Activated CD8-positive, alpha-beta T cell treated with anti-CD3 and anti-CD28 coated beads, Interleukin-2, amount 10 ng/mL, durations not matched to agents 7 days and 5 days (primary cell): ENCODE measurements at regions of chr10 and their contacts with region 1.

Region 1: DNA sequence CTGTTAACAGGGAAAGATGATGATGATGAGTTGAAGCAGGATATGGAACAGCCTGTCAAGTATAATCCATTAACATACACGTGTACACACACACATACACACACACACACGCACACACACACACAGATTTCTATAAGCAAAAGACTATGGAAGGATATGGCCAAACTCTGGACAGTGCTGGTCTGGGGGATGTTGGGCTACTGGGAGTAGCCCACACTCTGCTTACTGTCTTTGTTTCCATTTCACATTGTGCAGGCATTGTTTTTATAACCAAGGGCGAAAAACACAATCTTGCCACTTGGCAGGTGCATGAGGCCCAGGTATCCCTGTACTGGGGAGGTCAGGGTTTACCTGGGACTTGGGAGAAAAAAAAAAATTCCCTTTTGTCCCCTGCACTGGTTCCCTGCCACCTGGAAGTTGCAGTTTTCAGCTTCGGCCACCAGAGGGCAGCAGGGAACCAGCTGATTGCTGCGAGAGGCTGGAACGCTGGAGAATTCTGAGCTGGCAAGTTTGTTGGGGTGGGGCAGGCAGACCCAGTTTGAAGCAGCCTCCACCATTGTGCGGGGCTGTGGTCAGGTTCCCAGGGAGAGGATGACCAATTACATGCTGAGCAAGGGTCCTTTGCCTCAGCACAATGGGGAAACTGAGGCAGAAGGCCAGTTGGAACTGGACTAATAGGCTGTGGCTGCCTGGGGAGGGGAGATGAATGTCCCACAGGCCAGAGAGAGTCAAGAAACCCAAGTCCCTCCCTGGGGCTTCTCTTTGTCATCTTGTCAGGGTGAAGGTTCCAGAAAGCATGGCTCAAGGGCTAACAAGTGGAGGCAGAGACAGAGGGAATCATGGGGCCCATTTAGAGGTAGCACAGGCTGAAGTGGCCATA is 27.3 kb downstream of the PPIF start:
- DNase-seq: peak; percentile 80
- ATAC-seq: peak; percentile 78
- H3K4me3 Mint-ChIP-seq: no peak overlapping the region
- H3K27ac Mint-ChIP-seq: no peak overlapping the region
- H3K4me1 Mint-ChIP-seq: peaks cover 4% of the 10 kb centered on the region
- H3K27me3 Mint-ChIP-seq: peaks cover 11% of the 10 kb centered on the region

Region 2: DNA sequence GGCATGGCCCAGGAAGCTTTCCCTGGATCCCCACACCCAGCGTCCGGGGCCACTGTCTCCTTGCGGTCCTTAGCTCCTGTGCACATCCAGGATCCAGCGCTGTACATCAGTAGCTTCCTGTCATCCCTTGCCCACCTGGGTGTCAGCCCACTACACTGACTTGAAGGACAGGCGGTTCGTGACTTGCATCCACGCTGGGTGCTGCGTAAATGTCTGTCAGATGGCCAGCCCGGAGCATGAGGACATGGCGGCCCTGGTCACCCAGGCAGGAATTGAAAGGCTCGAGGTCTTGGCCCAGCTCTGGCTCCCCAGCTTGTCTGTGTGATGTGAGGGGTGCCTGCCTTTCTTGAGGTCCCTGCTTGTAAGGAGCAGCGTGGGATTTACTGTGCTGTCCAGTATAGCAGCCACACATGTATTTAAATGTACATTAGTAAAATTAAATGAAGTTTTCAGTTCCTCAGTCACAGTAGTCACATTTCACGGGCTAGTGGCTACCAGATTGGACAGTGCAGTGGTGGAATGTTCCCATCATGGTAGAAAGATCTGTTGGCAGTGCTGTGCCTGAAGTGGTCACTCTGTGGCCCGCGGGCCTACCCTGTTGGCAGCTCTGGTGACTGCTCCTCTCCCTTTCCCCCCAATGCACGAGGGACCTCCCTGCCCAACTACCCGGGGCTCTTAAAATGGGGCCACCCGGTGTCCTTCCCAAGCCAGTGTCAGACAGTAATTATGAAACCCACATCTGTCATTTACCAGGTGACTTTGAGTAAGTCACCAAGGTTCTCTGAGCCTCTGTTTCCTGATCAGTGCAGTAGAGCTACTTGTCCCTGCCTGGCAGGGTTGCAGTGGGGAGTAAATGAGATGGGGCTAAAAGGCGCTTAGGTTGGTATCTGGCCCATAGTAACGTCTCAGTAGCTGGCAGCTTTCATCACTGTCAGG is 125.1 kb before region 1 on chr10:
- CTCF ChIA-PET with region 1: interaction called, 10 read pairs
- POLR2A ChIA-PET with region 1: no interaction called
- DNase-seq: peak; percentile 51
- ATAC-seq: peak; percentile 57
- H3K4me3 Mint-ChIP-seq: peak overlapping the region; percentile 16
- H3K27ac Mint-ChIP-seq: peak overlapping the region; percentile 86
- H3K4me1 Mint-ChIP-seq: peaks cover 72% of the 10 kb centered on the region
- H3K27me3 Mint-ChIP-seq: no peaks in the 10 kb centered on the region

Region 3: GRCh38 chr10:79358783-79359182 is 15.8 kb before region 1 on chr10:
- CTCF ChIA-PET with region 1: interaction called, 12 read pairs
- POLR2A ChIA-PET with region 1: no interaction called
- DNase-seq: no peak
- ATAC-seq: no peak
- H3K4me3 Mint-ChIP-seq: no peak overlapping the region
- H3K27ac Mint-ChIP-seq: no peak overlapping the region
- H3K4me1 Mint-ChIP-seq: peaks cover 42% of the 10 kb centered on the region
- H3K27me3 Mint-ChIP-seq: peaks cover 10% of the 10 kb centered on the region

Region 4: DNA sequence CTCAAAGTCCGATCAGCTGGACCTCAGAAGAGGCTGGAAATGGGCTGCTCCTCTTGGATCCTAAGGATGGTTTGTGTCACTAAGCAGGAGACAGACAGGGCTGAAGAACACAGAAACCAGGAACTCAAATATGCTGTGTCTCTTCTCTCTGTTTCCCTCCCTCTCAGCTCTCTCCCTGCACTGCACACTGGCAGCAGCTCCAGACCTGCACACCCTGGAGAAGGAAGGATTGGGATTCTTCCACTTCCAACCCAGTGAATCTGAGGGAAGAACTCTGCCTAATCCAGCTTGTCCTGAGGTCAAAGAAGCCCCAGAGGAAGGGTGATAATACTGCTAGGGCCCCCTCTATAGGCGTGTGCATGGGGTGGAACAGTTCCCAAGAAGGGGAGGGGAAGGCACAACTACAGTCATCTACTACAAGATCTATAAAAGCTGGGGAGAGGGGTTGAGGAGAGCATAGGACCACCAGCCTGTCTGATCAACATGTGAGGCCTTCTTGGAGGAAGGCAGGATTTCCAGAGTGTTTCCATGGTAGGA is 93.5 kb after region 1 on chr10:
- CTCF ChIA-PET with region 1: interaction called, 38 read pairs
- POLR2A ChIA-PET with region 1: no interaction called
- DNase-seq: no peak
- ATAC-seq: no peak
- H3K4me3 Mint-ChIP-seq: no peak overlapping the region
- H3K27ac Mint-ChIP-seq: no peak overlapping the region
- H3K4me1 Mint-ChIP-seq: no peaks in the 10 kb centered on the region
- H3K27me3 Mint-ChIP-seq: peaks cover 7% of the 10 kb centered on the region

Region 5: DNA sequence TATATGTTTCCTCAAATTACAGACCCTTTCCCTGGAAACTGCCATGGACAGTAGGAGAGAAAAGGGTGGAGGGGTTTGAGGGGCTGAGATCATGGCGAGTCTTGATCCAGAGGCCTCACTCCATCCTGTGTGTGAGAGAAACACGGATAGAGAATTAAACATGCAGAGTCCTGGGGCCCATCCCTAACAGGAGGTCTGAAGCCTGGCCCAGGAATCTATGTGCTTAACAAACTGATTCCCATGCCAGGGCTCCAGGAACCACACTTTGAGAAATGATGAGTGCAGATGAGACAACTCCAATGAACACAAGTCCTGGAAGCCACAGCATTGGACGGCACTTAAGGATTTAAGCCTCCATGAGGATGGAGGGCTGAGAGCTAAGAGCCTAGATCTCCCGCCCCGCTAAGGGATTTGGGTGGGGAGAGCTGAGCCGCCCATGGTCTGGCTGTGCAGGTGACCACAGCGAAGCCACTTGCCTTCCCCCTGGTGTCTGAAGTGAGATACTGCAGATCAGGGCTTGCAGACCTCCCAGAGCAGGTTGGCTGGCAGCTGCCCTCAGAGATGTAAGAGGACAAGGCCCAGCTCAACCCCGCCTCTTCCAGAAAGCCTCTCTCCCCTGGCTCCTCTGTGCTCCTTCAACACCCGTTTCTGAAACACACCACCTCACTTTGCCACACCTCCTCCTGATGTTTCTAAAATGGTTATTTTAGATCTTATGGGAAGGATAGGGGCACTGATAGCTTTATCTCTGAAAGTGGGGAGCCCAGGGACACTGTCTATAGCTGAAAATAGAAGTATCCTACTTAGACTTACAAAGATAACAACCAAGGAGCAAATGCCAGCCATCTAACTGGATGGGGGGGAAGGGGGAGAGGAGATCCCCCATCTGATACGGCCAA is 113.0 kb after region 1 on chr10:
- CTCF ChIA-PET with region 1: interaction called, 61 read pairs
- POLR2A ChIA-PET with region 1: no interaction called
- DNase-seq: peak; percentile 47
- ATAC-seq: peak; percentile 78
- H3K4me3 Mint-ChIP-seq: no peak overlapping the region
- H3K27ac Mint-ChIP-seq: no peak overlapping the region
- H3K4me1 Mint-ChIP-seq: peaks cover 7% of the 10 kb centered on the region
- H3K27me3 Mint-ChIP-seq: peaks cover 6% of the 10 kb centered on the region